ENCODE measurements at regions of chrX and their contacts with region 1.

Region 1: DNA sequence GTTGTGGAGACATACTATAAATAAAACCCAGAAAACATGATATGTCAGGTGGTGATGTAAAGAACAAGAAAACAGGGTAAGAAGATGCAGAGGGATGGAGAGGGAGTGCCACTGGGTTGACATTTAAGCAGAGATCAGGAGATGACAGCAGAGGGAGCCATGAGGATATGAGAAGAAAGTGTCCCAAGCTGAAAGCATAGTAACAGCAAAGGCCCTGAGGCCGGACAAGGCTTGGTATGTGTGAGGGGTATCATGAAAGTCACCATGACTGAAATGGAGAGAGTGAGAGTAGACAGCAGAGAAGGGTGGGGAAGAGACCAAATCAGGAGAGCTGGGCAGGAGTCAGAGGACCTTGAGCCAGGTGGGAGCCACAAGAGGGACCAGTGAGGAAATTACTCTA is 3.4 kb downstream of the GPKOW start:
- DNase-seq: no peak
- H3K4me3 ChIP-seq: no peak overlapping the region
- H3K27ac ChIP-seq: no peak overlapping the region
- H3K4me1 ChIP-seq: no peaks in the 10 kb centered on the region
- H3K27me3 ChIP-seq: no peaks in the 10 kb centered on the region
- CTCF ChIP-seq: no peak

Region 2: DNA sequence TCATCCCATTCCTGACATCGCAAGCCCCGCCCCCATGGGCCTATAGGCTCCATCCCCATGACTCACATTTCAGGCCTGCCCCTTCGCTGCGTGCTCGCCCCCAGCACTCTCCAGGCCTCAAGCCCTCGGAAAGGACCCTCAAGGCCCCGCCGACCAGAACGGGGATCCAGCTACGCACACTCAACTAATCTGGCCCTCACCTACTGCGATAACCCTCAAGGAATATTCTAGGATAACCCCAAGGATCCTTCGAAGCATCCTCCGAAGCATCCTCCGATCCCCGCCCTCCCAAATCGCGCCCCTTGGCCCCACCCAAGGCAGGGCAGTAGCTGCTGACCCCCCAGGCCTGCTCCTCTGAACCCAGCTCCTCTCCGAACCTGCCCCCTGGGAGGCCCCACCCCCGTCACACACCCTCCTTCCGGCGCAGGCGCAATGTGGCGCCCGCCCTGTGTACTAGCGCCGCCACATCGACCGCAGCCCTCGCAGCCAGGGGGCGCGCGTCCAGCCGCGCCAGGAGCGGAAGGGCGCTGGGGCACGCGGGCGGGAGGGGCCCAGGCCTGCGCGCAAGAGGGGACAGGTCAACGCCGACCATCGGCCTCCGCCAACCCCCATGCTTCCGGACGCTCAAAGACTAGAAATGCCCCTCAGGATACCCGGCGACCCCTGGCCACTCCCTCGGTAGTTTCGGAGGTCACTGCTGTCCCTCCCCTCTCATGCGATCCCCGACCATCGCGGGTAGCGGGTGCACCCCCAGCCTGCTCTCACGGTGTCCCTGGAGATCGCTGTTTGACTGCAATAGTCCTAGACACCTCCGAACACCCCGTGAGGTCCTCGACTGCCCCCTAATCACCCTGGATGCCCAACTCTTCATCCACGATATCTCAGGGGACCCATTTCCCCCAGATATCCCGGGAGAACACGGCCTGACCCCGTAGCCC is 36.1 kb after region 1 on chrX:
- intact Hi-C with region 1: loop called (anchors 5 kb)
- DNase-seq: peak; percentile 91
- H3K4me3 ChIP-seq: peak overlapping the region; percentile 28
- H3K27ac ChIP-seq: peak overlapping the region; percentile 96
- H3K4me1 ChIP-seq: no peaks in the 10 kb centered on the region
- H3K27me3 ChIP-seq: no peaks in the 10 kb centered on the region
- CTCF ChIP-seq: peak; percentile 49

Measured in colonic mucosa (tissue), 4 donors.